Caco-2 (cell line): ENCODE measurements at regions of chr20 and their contacts with region 1.

Region 1: GRCh38 chr20:39874049-39874888 is 814.8 kb downstream of the MAFB start:
- DNase-seq: peak; percentile 87 to 92
- H3K4me3 ChIP-seq: no peak overlapping the region
- H3K4me3 Mint-ChIP-seq: no peak overlapping the region
- H3K27ac Mint-ChIP-seq: no peak overlapping the region
- H3K4me1 ChIP-seq: no peaks in the 10 kb centered on the region
- H3K4me1 Mint-ChIP-seq: no peaks in the 10 kb centered on the region
- H3K27me3 ChIP-seq: no peaks in the 10 kb centered on the region
- H3K27me3 Mint-ChIP-seq: no peaks in the 10 kb centered on the region
- CTCF ChIP-seq: peak; percentile 94 to 96

Region 2: GRCh38 chr20:39112178-39112743 is 762.0 kb before region 1 on chr20:
- CTCF ChIA-PET with region 1: interaction called, 3 read pairs
- POLR2A ChIA-PET with region 1: no interaction called
- intact Hi-C with region 1: loop called (anchors 1 kb)
- DNase-seq: peak; percentile 78 to 80
- H3K4me3 ChIP-seq: no peak overlapping the region
- H3K4me3 Mint-ChIP-seq: no peak overlapping the region
- H3K27ac Mint-ChIP-seq: peak overlapping the region; percentile 21
- H3K4me1 ChIP-seq: peaks cover 9% of the 10 kb centered on the region; the same call in 1 of the 2 replicates
- H3K4me1 Mint-ChIP-seq: peaks cover 6% of the 10 kb centered on the region
- H3K27me3 ChIP-seq: no peaks in the 10 kb centered on the region; the same call in 1 of the 2 replicates
- H3K27me3 Mint-ChIP-seq: peaks cover 21% of the 10 kb centered on the region
- CTCF ChIP-seq: peak; percentile 91 to 98

Region 3: DNA sequence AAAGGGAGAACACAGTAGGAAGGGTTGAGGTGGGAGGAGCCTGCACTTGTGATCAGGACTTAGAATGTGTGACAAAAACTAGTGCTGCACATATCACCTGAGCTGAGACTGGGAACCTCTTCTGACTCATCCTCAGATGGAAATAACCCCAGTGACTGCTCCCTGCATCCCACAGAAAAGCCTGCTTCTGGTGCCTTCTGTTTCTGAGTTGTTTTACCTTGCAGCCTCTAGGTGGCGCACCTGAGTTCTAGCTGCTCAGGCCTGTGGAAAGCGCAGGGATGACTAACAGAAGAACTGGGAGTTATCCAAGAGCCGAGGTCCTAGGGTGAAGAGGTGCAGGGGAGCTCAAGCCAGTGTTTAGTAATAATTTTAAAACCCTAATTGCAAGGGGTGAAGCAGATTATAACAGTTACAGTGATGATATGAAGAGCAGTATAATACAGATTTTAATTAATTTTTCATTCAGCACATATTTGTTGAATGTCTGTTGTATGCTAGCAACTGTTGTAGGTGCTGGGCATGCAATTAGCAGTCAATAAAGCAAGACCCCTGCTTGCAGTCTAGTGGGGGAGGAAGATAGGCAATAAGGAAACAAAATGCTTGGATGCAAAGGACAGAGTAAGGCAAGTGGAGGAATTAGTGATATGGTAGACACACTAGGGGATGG is 609.6 kb before region 1 on chr20:
- CTCF ChIA-PET with region 1: interaction called, 19 read pairs
- POLR2A ChIA-PET with region 1: no interaction called
- intact Hi-C with region 1: loop called (anchors 1 kb)
- DNase-seq: peak; percentile 77 to 81
- H3K4me3 ChIP-seq: no peak overlapping the region
- H3K4me3 Mint-ChIP-seq: no peak overlapping the region
- H3K27ac Mint-ChIP-seq: no peak overlapping the region
- H3K4me1 ChIP-seq: no peaks in the 10 kb centered on the region
- H3K4me1 Mint-ChIP-seq: no peaks in the 10 kb centered on the region
- H3K27me3 ChIP-seq: no peaks in the 10 kb centered on the region
- H3K27me3 Mint-ChIP-seq: peaks cover 23% of the 10 kb centered on the region
- CTCF ChIP-seq: peak; percentile 98 to 99

Region 4: DNA sequence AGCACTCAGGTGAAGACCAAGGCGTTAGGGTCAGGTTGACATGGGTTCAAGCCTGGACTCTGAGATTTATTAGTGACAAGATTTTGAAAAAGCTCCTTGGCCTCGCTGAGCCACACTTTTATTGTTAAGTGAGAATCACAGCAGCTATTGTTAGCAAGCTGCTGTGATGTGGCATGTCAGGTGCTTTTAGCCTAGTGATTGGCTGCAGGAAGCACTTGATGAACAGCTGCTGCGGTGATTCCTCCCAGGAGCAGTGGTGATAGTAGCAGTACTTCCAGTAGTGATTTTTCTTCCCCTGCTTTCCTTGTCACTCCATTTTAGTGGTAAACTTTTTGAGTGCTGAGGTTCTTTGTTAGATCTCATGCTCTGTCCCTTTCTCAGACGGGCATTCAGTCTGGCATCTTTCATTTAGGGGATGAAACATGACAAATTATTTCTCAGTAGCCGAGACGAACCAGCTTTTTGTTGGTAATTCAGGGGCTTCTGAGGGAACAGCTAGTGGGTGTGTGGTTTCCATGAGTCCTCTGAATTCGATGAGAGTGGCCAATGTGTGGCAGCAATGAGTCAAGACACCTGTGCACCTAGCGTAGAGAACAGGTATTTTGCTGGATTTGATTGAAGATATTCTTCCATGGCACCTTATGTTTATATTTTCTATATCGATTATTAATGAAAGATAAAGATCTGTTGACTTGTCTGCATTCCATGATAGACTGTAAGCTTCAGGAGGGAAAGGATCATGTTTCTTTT is 215.4 kb before region 1 on chr20:
- CTCF ChIA-PET with region 1: interaction called, 5 read pairs
- POLR2A ChIA-PET with region 1: no interaction called
- intact Hi-C with region 1: loop called (anchors 5 kb)
- DNase-seq: peak in 1 of 2 experiments; percentile 19
- H3K4me3 ChIP-seq: no peak overlapping the region
- H3K4me3 Mint-ChIP-seq: no peak overlapping the region
- H3K27ac Mint-ChIP-seq: no peak overlapping the region
- H3K4me1 ChIP-seq: no peaks in the 10 kb centered on the region
- H3K4me1 Mint-ChIP-seq: no peaks in the 10 kb centered on the region
- H3K27me3 ChIP-seq: no peaks in the 10 kb centered on the region; the same call in 1 of the 2 replicates
- H3K27me3 Mint-ChIP-seq: peaks cover 8% of the 10 kb centered on the region
- CTCF ChIP-seq: peak in 1 of 2 experiments; percentile 54

Region 5: DNA sequence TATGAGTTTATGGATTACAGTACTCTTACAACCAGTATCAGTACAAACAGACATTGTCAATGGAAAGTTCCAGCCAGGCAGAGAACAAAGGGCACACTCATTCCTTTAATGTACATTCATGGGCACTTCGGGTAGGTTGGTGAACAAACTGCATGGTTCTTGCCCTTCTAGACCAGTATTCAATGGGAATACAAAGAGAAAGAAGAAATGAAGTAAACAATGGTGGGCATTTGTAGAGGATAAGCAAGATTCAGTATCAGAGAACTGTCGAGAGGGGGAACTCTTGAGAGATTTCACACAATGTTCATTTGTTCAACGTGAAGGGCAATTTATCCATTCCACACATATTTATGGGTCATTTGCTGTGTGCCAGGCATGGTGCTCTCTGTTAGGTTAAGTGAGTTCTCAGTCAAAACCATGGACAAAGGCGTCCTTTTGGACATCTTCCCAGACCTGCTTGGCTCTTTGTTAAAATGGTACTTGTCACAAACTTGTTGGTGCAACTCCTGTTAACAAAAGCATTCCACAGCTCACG is 197.3 kb before region 1 on chr20:
- CTCF ChIA-PET with region 1: interaction called, 12 read pairs
- POLR2A ChIA-PET with region 1: no interaction called
- intact Hi-C with region 1: loop called (anchors 1 kb)
- DNase-seq: peak in 1 of 2 experiments; percentile 41
- H3K4me3 ChIP-seq: no peak overlapping the region
- H3K4me3 Mint-ChIP-seq: no peak overlapping the region
- H3K27ac Mint-ChIP-seq: no peak overlapping the region
- H3K4me1 ChIP-seq: no peaks in the 10 kb centered on the region
- H3K4me1 Mint-ChIP-seq: no peaks in the 10 kb centered on the region
- H3K27me3 ChIP-seq: no peaks in the 10 kb centered on the region
- H3K27me3 Mint-ChIP-seq: no peaks in the 10 kb centered on the region
- CTCF ChIP-seq: peak; percentile 52 to 71

Region 6: GRCh38 chr20:39716796-39717341 is 157.4 kb before region 1 on chr20:
- CTCF ChIA-PET with region 1: no interaction called
- POLR2A ChIA-PET with region 1: no interaction called
- intact Hi-C with region 1: no loop called
- DNase-seq: no peak
- H3K4me3 ChIP-seq: no peak overlapping the region
- H3K4me3 Mint-ChIP-seq: no peak overlapping the region
- H3K27ac Mint-ChIP-seq: no peak overlapping the region
- H3K4me1 ChIP-seq: no peaks in the 10 kb centered on the region
- H3K4me1 Mint-ChIP-seq: no peaks in the 10 kb centered on the region
- H3K27me3 ChIP-seq: no peaks in the 10 kb centered on the region
- H3K27me3 Mint-ChIP-seq: no peaks in the 10 kb centered on the region
- CTCF ChIP-seq: no peak

Region 7: DNA sequence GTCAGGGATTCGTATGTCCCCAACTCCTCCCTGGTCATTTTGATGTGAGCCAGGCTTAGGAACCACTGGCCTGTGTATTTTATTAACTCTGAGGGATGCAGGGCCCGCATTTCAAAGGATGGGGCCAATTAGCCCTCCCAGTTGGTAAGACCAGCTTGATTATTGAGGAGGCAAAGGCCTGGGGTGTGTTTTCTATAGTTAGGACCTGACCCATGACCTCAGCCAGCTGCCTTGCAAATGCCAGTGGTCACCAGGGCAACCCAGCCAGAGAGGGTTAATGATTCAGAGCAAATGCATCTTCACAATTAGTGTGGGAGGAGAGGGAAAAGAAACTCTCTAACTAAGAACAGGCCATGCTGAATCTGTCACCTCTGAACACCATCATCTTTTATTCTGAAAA is 20.6 kb before region 1 on chr20:
- CTCF ChIA-PET with region 1: interaction called, 11 read pairs
- POLR2A ChIA-PET with region 1: no interaction called
- intact Hi-C with region 1: no loop called
- DNase-seq: no peak
- H3K4me3 ChIP-seq: no peak overlapping the region
- H3K4me3 Mint-ChIP-seq: no peak overlapping the region
- H3K27ac Mint-ChIP-seq: no peak overlapping the region
- H3K4me1 ChIP-seq: no peaks in the 10 kb centered on the region
- H3K4me1 Mint-ChIP-seq: no peaks in the 10 kb centered on the region
- H3K27me3 ChIP-seq: no peaks in the 10 kb centered on the region
- H3K27me3 Mint-ChIP-seq: peaks cover 8% of the 10 kb centered on the region
- CTCF ChIP-seq: no peak

Region 8: GRCh38 chr20:39946053-39946810 is 72.0 kb after region 1 on chr20:
- CTCF ChIA-PET with region 1: no interaction called
- POLR2A ChIA-PET with region 1: no interaction called
- intact Hi-C with region 1: no loop called
- DNase-seq: no peak
- H3K4me3 ChIP-seq: no peak overlapping the region
- H3K4me3 Mint-ChIP-seq: no peak overlapping the region
- H3K27ac Mint-ChIP-seq: no peak overlapping the region
- H3K4me1 ChIP-seq: no peaks in the 10 kb centered on the region
- H3K4me1 Mint-ChIP-seq: no peaks in the 10 kb centered on the region
- H3K27me3 ChIP-seq: no peaks in the 10 kb centered on the region
- H3K27me3 Mint-ChIP-seq: peaks cover 2% of the 10 kb centered on the region
- CTCF ChIP-seq: no peak